Endothelial cell of umbilical vein (primary cell): ENCODE measurements at regions of chr12 and their contacts with region 1.

Region 1: GRCh38 chr12:114662512-114663177 is 21.3 kb downstream of the TBX3 start:
- DNase-seq: peak; percentile 82
- H3K4me3 ChIP-seq: no peak overlapping the region
- H3K27ac ChIP-seq: no peak overlapping the region
- H3K4me1 ChIP-seq: no peaks in the 10 kb centered on the region
- H3K27me3 ChIP-seq: peaks cover 42 to 44% of the 10 kb centered on the region in 2 experiments
- CTCF ChIP-seq: peak; percentile 77 to 89
- POLR2A ChIP-seq: no peak

Region 2: GRCh38 chr12:114384739-114385138 is 277.9 kb before region 1 on chr12:
- CTCF ChIA-PET with region 1: no interaction called
- POLR2A ChIA-PET with region 1: no interaction called
- dilution Hi-C with region 1: no loop called
- intact Hi-C with region 1: no loop called
- DNase-seq: no peak
- H3K4me3 ChIP-seq: no peak overlapping the region
- H3K27ac ChIP-seq: no peak overlapping the region
- H3K4me1 ChIP-seq: no peaks in the 10 kb centered on the region
- H3K27me3 ChIP-seq: no peaks in the 10 kb centered on the region
- CTCF ChIP-seq: no peak
- POLR2A ChIP-seq: no peak

Region 3: GRCh38 chr12:114625294-114625851 is 37.3 kb before region 1 on chr12:
- CTCF ChIA-PET with region 1: interaction called, 5 read pairs
- POLR2A ChIA-PET with region 1: no interaction called
- dilution Hi-C with region 1: no loop called
- intact Hi-C with region 1: loop called (anchors 2 kb)
- DNase-seq: peak; percentile 29
- H3K4me3 ChIP-seq: no peak overlapping the region
- H3K27ac ChIP-seq: no peak overlapping the region
- H3K4me1 ChIP-seq: no peaks in the 10 kb centered on the region
- H3K27me3 ChIP-seq: no peaks in the 10 kb centered on the region
- CTCF ChIP-seq: peak; percentile 57 to 63
- POLR2A ChIP-seq: no peak

Region 4: GRCh38 chr12:115752913-115753726 is 1090.5 kb after region 1 on chr12:
- CTCF ChIA-PET with region 1: no interaction called
- POLR2A ChIA-PET with region 1: no interaction called
- dilution Hi-C with region 1: no loop called
- intact Hi-C with region 1: loop called (anchors 1 kb)
- DNase-seq: peak; percentile 18
- H3K4me3 ChIP-seq: no peak overlapping the region
- H3K27ac ChIP-seq: no peak overlapping the region
- H3K4me1 ChIP-seq: no peaks in the 10 kb centered on the region
- H3K27me3 ChIP-seq: no peaks in the 10 kb centered on the region
- CTCF ChIP-seq: peak; percentile 7 to 22
- POLR2A ChIP-seq: no peak

Region 5: GRCh38 chr12:115871714-115872113 is 1209.1 kb after region 1 on chr12:
- CTCF ChIA-PET with region 1: no interaction called
- POLR2A ChIA-PET with region 1: no interaction called
- dilution Hi-C with region 1: no loop called
- intact Hi-C with region 1: loop called (anchors 5 kb)
- DNase-seq: no peak
- H3K4me3 ChIP-seq: no peak overlapping the region
- H3K27ac ChIP-seq: no peak overlapping the region
- H3K4me1 ChIP-seq: no peaks in the 10 kb centered on the region
- H3K27me3 ChIP-seq: no peaks in the 10 kb centered on the region
- CTCF ChIP-seq: peak; percentile 34 to 35
- POLR2A ChIP-seq: no peak

Region 6: DNA sequence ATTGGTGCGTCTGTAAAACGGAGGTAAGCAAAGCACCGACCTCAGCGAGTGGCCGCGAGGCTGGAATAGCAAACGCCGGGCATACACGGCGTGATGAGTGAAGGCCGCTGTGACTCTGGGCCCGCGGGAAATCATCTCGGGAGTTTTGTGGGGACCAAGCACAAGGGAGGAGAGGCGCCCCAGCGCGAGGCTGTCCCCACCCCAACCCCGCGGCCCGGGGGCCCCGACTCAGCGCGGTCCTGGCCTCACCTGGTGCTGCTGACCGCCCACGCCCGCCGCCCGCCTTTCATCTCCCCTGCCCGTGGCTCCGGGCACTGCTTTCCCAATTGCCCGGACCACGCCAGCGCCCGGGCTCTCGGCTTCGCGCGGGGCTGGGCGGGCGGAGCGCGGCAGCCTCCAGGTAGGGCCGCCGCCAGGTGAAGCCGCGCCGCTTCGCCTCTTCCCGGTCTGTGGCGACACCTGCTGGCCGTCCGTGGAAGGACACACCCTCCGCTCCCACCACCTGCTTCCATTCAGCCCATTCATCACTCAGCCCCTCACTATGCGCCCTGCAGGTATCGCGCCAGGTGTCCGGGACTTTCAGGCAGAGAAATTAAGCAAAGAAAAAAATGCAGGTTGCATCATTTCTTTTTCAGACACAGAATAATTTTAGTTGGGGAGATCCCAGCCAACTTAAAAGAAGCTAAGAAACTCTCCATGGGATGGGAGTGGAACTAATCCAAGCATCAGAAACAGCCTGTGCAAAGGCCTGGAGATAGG is 1254.4 kb after region 1 on chr12:
- CTCF ChIA-PET with region 1: interaction called, 113 read pairs
- POLR2A ChIA-PET with region 1: no interaction called
- dilution Hi-C with region 1: no loop called
- intact Hi-C with region 1: loop called (anchors 1 kb)
- DNase-seq: peak; percentile 5
- H3K4me3 ChIP-seq: no peak overlapping the region
- H3K27ac ChIP-seq: no peak overlapping the region
- H3K4me1 ChIP-seq: no peaks in the 10 kb centered on the region
- H3K27me3 ChIP-seq: peaks cover 0 to 2% of the 10 kb centered on the region in 2 experiments
- CTCF ChIP-seq: peak; percentile 77 to 89
- POLR2A ChIP-seq: no peak

Region 7: GRCh38 chr12:115946867-115947696 is 1284.4 kb after region 1 on chr12:
- CTCF ChIA-PET with region 1: interaction called, 14 read pairs
- POLR2A ChIA-PET with region 1: no interaction called
- dilution Hi-C with region 1: no loop called
- intact Hi-C with region 1: loop called (anchors 1 kb)
- DNase-seq: no peak
- H3K4me3 ChIP-seq: no peak overlapping the region
- H3K27ac ChIP-seq: no peak overlapping the region
- H3K4me1 ChIP-seq: no peaks in the 10 kb centered on the region
- H3K27me3 ChIP-seq: no peaks in the 10 kb centered on the region
- CTCF ChIP-seq: peak; percentile 31 to 39
- POLR2A ChIP-seq: no peak